Heart right ventricle (tissue), 16 donors: ENCODE measurements at regions of chr6 and their contacts with region 1.

Region 1: GRCh38 chr6:104859225-104860146 is at the start of gene HACE1:
- DNase-seq: peak; percentile 91 to 92
- ATAC-seq: peak; percentile 99 to 100 (median 100)
- H3K4me3 ChIP-seq: peak within 1 kb of the TSS; percentile 79 to 98 (median 90)
- H3K27ac ChIP-seq: peak within 1 kb of the TSS; percentile 41 to 84 (median 79)
- H3K4me1 ChIP-seq: peaks cover 0 to 18% (median 9%) of the 10 kb centered on the region in 9 donors
- H3K27me3 ChIP-seq: no peaks in the 10 kb centered on the region
- CTCF ChIP-seq: peak in 5 of 9 donors; percentile 21 to 62 (median 37)
- total RNA-seq, gene HACE1: 6.3 to 9.5 (median 7.1) TPM

Region 2: GRCh38 chr6:104500265-104500664 is 359.2 kb before region 1 on chr6:
- intact Hi-C with region 1: no loop called
- DNase-seq: no peak
- ATAC-seq: no peak
- H3K4me3 ChIP-seq: no peak overlapping the region
- H3K27ac ChIP-seq: no peak overlapping the region
- H3K4me1 ChIP-seq: no peaks in the 10 kb centered on the region
- H3K27me3 ChIP-seq: no peaks in the 10 kb centered on the region
- CTCF ChIP-seq: no peak

Region 3: DNA sequence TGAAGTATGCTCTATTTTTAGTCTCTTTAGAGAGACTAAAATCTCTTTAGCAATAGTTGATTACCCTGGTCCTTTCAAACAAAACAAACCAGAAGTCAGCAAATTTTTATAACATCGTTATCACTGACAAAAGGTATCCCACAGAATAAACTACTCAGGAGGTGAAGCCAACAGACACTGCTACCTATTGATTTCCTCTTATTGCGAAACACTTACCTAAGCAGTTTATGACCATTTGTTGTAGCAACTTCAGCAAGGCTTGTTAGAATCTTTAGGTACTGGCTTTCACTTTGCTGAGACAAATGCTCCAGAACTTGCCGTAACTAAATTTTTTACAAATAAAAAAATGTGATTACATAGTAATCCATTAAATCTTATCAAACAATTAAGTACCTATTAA is 64.1 kb before region 1 on chr6:
- intact Hi-C with region 1: no loop called
- DNase-seq: no peak
- ATAC-seq: no peak
- H3K4me3 ChIP-seq: no peak overlapping the region
- H3K27ac ChIP-seq: no peak overlapping the region
- H3K4me1 ChIP-seq: no peaks in the 10 kb centered on the region
- H3K27me3 ChIP-seq: no peaks in the 10 kb centered on the region
- CTCF ChIP-seq: no peak

Region 4: DNA sequence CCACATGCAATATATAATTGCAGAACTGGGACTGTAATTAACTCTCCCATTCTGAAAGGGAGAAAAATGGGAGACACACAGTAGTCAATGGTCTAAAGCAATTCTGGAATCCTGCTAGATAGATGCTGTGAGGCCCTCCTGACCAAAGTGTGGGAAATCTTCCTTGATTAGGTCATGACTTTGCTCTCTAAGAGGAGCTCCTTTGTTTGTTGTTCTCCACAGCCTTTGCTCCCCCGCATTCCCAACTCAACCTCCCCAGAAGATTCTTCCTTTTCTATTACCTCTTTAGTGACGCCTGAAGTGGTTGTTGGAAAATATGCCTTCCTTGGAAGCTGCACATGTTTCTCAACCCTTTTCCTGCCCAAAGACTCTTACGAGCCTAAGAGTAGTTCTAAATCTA is 68.7 kb after region 1 on chr6:
- intact Hi-C with region 1: no loop called
- DNase-seq: no peak
- ATAC-seq: no peak
- H3K4me3 ChIP-seq: no peak overlapping the region
- H3K27ac ChIP-seq: no peak overlapping the region
- H3K4me1 ChIP-seq: no peaks in the 10 kb centered on the region
- H3K27me3 ChIP-seq: peaks cover 0 to 35% (median 12%) of the 10 kb centered on the region in 7 donors
- CTCF ChIP-seq: no peak

Region 5: GRCh38 chr6:105136431-105137350 is 277.2 kb after region 1 on chr6:
- intact Hi-C with region 1: loop called in 1 of 10 experiments (anchors 5 kb)
- DNase-seq: peak; percentile 75 to 77
- ATAC-seq: peak; percentile 78 to 90 (median 85)
- H3K4me3 ChIP-seq: peak overlapping the region; percentile 69 to 95 (median 86)
- H3K27ac ChIP-seq: peak overlapping the region; percentile 81 to 93 (median 91)
- H3K4me1 ChIP-seq: peaks cover 0 to 15% (median 7%) of the 10 kb centered on the region in 9 donors
- H3K27me3 ChIP-seq: peaks cover 0 to 63% (median 0%) of the 10 kb centered on the region in 7 donors
- CTCF ChIP-seq: peak in 6 of 9 donors; percentile 9 to 46 (median 40)

Region 6: DNA sequence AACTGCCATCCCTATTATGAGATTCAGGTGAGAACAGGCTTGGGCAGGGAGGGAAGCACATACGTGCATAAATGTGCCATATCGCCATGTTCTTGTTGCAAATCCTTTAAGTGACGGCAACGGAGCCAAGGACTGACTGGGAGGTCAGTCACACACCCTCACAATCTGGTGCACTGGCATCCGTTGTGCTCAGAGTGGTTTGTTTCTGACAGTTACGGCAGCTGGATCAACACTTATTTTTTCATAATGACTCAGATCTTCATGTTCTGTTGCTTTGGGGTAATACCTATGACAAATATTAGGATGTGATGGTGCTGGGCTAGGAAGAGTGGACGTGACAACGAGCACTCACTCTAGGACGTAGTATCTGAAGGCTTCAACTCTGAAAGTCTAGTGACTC is 599.6 kb after region 1 on chr6:
- intact Hi-C with region 1: no loop called
- DNase-seq: no peak
- ATAC-seq: peak in 1 of 8 donors; percentile 29
- H3K4me3 ChIP-seq: no peak overlapping the region
- H3K27ac ChIP-seq: peak overlapping the region in 1 of 10 donors; percentile 73
- H3K4me1 ChIP-seq: peaks cover 0 to 6% (median 0%) of the 10 kb centered on the region in 9 donors
- H3K27me3 ChIP-seq: peaks cover 0 to 4% (median 0%) of the 10 kb centered on the region in 7 donors
- CTCF ChIP-seq: no peak